Psoas muscle (tissue), 8 donors: ENCODE measurements at regions of chr19 and their contacts with region 1.

Region 1: GRCh38 chr19:12333162-12334159 is at the start of gene ZNF563:
- DNase-seq: peak; percentile 97 to 98
- ATAC-seq: peak; percentile 99 to 100 (median 100)
- H3K4me3 ChIP-seq: peak within 1 kb of the TSS; percentile 98
- H3K27ac ChIP-seq: peak within 1 kb of the TSS; percentile 94
- H3K4me1 ChIP-seq: peaks cover 19% of the 10 kb centered on the region
- H3K27me3 ChIP-seq: no peaks in the 10 kb centered on the region
- CTCF ChIP-seq: no peak
- total RNA-seq, gene ZNF563: 0.84 to 2.5 (median 1.7) TPM

Region 2: GRCh38 chr19:12162882-12163806 is 170.3 kb before region 1 on chr19 and contains the start of gene ZNF136:
- intact Hi-C with region 1: no loop called
- DNase-seq: peak; percentile 93 to 96
- ATAC-seq: peak; percentile 98 to 100 (median 100)
- H3K4me3 ChIP-seq: peak within 1 kb of the TSS; percentile 89
- H3K27ac ChIP-seq: peak within 1 kb of the TSS; percentile 85
- H3K4me1 ChIP-seq: peaks cover 7% of the 10 kb centered on the region
- H3K27me3 ChIP-seq: no peaks in the 10 kb centered on the region
- CTCF ChIP-seq: no peak
- total RNA-seq, gene ZNF136: 2.1 to 3.7 (median 2.7) TPM

Region 3: GRCh38 chr19:12294249-12295158 is 39.0 kb before region 1 on chr19 and contains the start of gene ZNF44:
- intact Hi-C with region 1: loop called (anchors 2 kb)
- DNase-seq: peak; percentile 98
- ATAC-seq: peak; percentile 98 to 99 (median 99)
- H3K4me3 ChIP-seq: peak within 1 kb of the TSS; percentile 100
- H3K27ac ChIP-seq: peak within 1 kb of the TSS; percentile 98
- H3K4me1 ChIP-seq: peaks cover 18% of the 10 kb centered on the region
- H3K27me3 ChIP-seq: no peaks in the 10 kb centered on the region
- CTCF ChIP-seq: no peak
- total RNA-seq, gene ZNF44: 2.9 to 8.3 (median 6.0) TPM

Region 4: GRCh38 chr19:12365236-12366162 is 32.0 kb after region 1 on chr19 and contains the start of gene ZNF442:
- intact Hi-C with region 1: loop called in 1 of 2 experiments (anchors 5 kb)
- DNase-seq: peak; percentile 96 to 98
- ATAC-seq: peak; percentile 99
- H3K4me3 ChIP-seq: peak within 1 kb of the TSS; percentile 97
- H3K27ac ChIP-seq: peak within 1 kb of the TSS; percentile 95
- H3K4me1 ChIP-seq: peaks cover 11% of the 10 kb centered on the region
- H3K27me3 ChIP-seq: no peaks in the 10 kb centered on the region
- CTCF ChIP-seq: peak; percentile 64
- total RNA-seq, gene ZNF442: 0.66 to 2.2 (median 1.3) TPM

Region 5: GRCh38 chr19:12379749-12380737 is 46.6 kb after region 1 on chr19:
- intact Hi-C with region 1: no loop called
- DNase-seq: no peak
- ATAC-seq: no peak
- H3K4me3 ChIP-seq: no peak overlapping the region
- H3K27ac ChIP-seq: no peak overlapping the region
- H3K4me1 ChIP-seq: no peaks in the 10 kb centered on the region
- H3K27me3 ChIP-seq: no peaks in the 10 kb centered on the region
- CTCF ChIP-seq: no peak